ENCODE measurements at regions of chr20 and their contacts with region 1.

Region 1: DNA sequence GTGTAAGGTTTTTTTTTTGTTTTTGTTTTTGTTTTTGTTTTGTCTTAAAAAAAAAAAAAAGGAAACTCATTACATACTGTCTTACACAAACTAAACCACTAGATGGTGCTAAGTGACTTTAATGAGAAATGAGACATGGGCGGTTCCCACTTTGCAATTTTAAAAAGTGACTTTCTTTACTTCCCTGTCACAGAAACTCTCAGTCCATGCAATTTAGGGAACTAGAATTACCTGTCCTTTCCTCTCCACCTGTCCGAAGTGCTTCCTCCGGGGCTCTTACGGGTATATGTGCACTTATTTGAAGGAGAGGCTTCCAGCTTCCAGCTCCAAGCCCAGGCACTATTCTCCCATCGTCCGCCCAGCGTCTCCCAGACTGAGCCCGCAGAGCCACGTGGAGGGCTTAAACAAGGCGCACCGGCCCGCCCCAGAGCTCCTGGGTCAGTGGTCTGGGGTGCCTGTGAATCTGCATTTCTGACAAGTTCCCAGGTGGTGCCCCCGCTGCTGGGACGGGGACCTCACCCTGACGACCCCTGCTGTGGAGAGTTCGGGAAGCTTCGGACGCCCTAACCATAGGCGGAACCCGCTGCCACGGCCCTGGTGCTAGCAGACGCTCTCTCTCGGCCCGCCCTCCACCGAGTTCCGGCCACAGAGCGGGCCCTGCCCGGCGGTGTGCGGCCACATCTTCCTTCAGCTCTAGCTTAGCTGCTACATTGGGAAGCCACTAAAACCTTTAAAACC is 26.1 kb downstream of the BFSP1 start:
- DNase-seq: peak; percentile 15 to 67 (median 54)
- H3K4me3 ChIP-seq: peak overlapping the region; percentile 59
- H3K4me3 Mint-ChIP-seq: peak overlapping the region; percentile 86 to 95 (median 92)
- H3K27ac ChIP-seq: peak overlapping the region; percentile 38
- H3K27ac Mint-ChIP-seq: peak overlapping the region; percentile 90 to 99 (median 95)
- H3K4me1 ChIP-seq: peaks cover 31% of the 10 kb centered on the region
- H3K4me1 Mint-ChIP-seq: peaks cover 41 to 43% (median 42%) of the 10 kb centered on the region in 3 donors
- H3K27me3 ChIP-seq: no peaks in the 10 kb centered on the region
- H3K27me3 Mint-ChIP-seq: peaks cover 0 to 6% of the 10 kb centered on the region in 2 donors

Region 2: GRCh38 chr20:16573001-16573965 is 931.8 kb before region 1 on chr20 and contains the start of gene KIF16B:
- CTCF ChIA-PET with region 1: no interaction called
- POLR2A ChIA-PET with region 1: interaction called, 13 read pairs
- DNase-seq: peak; percentile 52 to 81 (median 77)
- H3K4me3 ChIP-seq: peak within 1 kb of the TSS; percentile 81
- H3K4me3 Mint-ChIP-seq: peak within 1 kb of the TSS; percentile 81 to 93 (median 89)
- H3K27ac ChIP-seq: peak within 1 kb of the TSS; percentile 48
- H3K27ac Mint-ChIP-seq: peak within 1 kb of the TSS in 7 of 8 donors; percentile 30 to 89 (median 81)
- H3K4me1 ChIP-seq: peaks cover 20% of the 10 kb centered on the region
- H3K4me1 Mint-ChIP-seq: peaks cover 39 to 56% (median 46%) of the 10 kb centered on the region in 3 donors
- H3K27me3 ChIP-seq: no peaks in the 10 kb centered on the region
- H3K27me3 Mint-ChIP-seq: peaks cover 0 to 8% of the 10 kb centered on the region in 2 donors
- total RNA-seq, gene KIF16B: 3.2 to 3.4 TPM

Region 3: DNA sequence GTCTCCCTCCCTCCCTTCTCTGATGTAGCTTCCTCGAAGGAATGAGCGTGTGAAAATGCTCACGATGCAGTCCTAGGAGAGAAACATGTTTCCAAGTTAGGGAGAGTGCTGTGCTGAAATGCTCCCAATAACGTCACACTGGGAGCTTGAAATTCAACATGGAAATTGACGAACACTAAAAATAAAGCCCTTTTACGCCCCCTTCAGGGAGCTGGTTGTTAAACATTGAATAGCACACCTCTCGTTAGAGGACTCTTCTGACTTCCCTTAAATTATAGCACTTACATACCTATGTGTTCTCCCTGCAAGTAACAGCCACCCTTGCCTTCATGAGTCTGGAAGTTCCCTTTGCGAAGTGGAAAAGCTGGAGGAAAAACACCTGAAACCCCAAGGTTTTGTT is 62.5 kb before region 1 on chr20:
- CTCF ChIA-PET with region 1: no interaction called
- POLR2A ChIA-PET with region 1: no interaction called
- DNase-seq: no peak
- H3K4me3 ChIP-seq: no peak overlapping the region
- H3K4me3 Mint-ChIP-seq: no peak overlapping the region
- H3K27ac ChIP-seq: no peak overlapping the region
- H3K27ac Mint-ChIP-seq: no peak overlapping the region
- H3K4me1 ChIP-seq: no peaks in the 10 kb centered on the region
- H3K4me1 Mint-ChIP-seq: no peaks in the 10 kb centered on the region
- H3K27me3 ChIP-seq: no peaks in the 10 kb centered on the region
- H3K27me3 Mint-ChIP-seq: peaks cover 20 to 29% of the 10 kb centered on the region in 2 donors

Region 4: GRCh38 chr20:17569616-17570346 is 64.7 kb after region 1 on chr20 and contains the start of gene DSTN:
- CTCF ChIA-PET with region 1: interaction called, 10 read pairs
- POLR2A ChIA-PET with region 1: interaction called, 5 read pairs
- DNase-seq: peak; percentile 82 to 91 (median 89)
- H3K4me3 ChIP-seq: peak within 1 kb of the TSS; percentile 75
- H3K4me3 Mint-ChIP-seq: peak within 1 kb of the TSS; percentile 88 to 97 (median 94)
- H3K27ac ChIP-seq: peak within 1 kb of the TSS; percentile 84
- H3K27ac Mint-ChIP-seq: peak within 1 kb of the TSS; percentile 92 to 97 (median 94)
- H3K4me1 ChIP-seq: peaks cover 12% of the 10 kb centered on the region
- H3K4me1 Mint-ChIP-seq: peaks cover 28 to 48% (median 31%) of the 10 kb centered on the region in 3 donors
- H3K27me3 ChIP-seq: no peaks in the 10 kb centered on the region
- H3K27me3 Mint-ChIP-seq: peaks cover 2 to 6% of the 10 kb centered on the region in 2 donors
- total RNA-seq, gene DSTN: 66.4 to 66.9 TPM

Region 5: DNA sequence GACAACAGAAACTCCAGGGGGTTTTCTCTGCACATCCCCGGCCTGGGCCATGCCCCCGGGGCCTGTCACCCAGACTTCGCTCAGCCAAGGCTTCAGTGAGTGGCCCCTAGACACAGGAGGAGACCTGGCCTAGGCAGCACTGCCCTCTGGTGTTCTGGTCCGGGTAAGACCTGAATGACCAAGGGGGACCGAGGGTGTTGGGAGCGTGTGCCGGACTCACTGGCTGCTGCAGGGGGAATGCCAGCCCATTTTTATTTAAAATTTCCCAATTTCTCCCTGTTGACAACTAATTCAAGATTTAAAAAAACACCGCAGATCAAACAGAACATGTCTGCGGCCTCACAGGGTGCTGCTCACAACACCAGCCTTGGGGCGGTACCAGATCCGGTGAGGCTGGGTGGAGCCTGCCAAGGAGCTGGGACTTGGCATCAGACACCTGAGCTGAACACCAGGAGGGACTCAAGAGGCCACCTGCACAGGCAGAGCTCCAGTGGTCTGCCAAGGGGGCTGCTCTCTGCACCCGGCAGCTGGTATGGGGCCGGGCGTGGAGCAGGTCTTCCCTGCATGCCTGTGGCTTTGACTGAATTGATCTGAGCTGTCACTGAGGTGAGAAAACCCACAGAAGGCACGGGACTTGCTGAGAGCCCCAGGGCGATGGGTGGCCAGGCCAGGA is 112.6 kb after region 1 on chr20:
- CTCF ChIA-PET with region 1: interaction called, 28 read pairs
- POLR2A ChIA-PET with region 1: no interaction called
- DNase-seq: peak in 4 of 5 donors; percentile 34 to 60 (median 38)
- H3K4me3 ChIP-seq: no peak overlapping the region
- H3K4me3 Mint-ChIP-seq: no peak overlapping the region
- H3K27ac ChIP-seq: no peak overlapping the region
- H3K27ac Mint-ChIP-seq: peak overlapping the region in 5 of 8 donors; percentile 29 to 59 (median 52)
- H3K4me1 ChIP-seq: peaks cover 2% of the 10 kb centered on the region
- H3K4me1 Mint-ChIP-seq: peaks cover 4 to 11% (median 9%) of the 10 kb centered on the region in 3 donors
- H3K27me3 ChIP-seq: no peaks in the 10 kb centered on the region
- H3K27me3 Mint-ChIP-seq: no peaks in the 10 kb centered on the region

Region 6: GRCh38 chr20:17721802-17722486 is 216.9 kb after region 1 on chr20:
- CTCF ChIA-PET with region 1: no interaction called
- POLR2A ChIA-PET with region 1: no interaction called
- DNase-seq: no peak
- H3K4me3 ChIP-seq: no peak overlapping the region
- H3K4me3 Mint-ChIP-seq: no peak overlapping the region
- H3K27ac ChIP-seq: no peak overlapping the region
- H3K27ac Mint-ChIP-seq: no peak overlapping the region
- H3K4me1 ChIP-seq: no peaks in the 10 kb centered on the region
- H3K4me1 Mint-ChIP-seq: no peaks in the 10 kb centered on the region
- H3K27me3 ChIP-seq: no peaks in the 10 kb centered on the region
- H3K27me3 Mint-ChIP-seq: peaks cover 7 to 28% of the 10 kb centered on the region in 2 donors

Region 7: DNA sequence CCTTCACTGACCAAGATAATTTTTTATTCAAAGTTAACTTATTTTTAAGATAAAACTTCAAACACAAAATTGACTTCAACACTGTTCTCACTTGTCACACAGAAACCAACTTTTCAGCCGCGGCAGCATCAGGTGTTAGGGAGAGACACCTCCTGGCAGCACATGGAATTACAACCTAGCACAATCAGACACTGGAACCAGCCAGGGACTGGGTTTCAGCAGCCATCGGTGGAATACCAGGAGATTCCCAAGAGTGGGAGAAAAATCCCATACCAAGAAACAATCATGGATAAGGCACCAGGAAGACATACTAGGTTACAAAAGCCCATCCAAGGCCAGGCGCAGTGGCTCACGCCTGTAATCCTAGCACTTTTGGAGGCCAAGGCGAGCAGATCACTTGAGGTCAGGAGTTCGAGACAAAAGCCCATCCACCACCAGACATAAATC is 393.5 kb after region 1 on chr20:
- CTCF ChIA-PET with region 1: interaction called, 36 read pairs
- POLR2A ChIA-PET with region 1: no interaction called
- DNase-seq: peak; percentile 43 to 73 (median 45)
- H3K4me3 ChIP-seq: no peak overlapping the region
- H3K4me3 Mint-ChIP-seq: no peak overlapping the region
- H3K27ac ChIP-seq: no peak overlapping the region
- H3K27ac Mint-ChIP-seq: no peak overlapping the region
- H3K4me1 ChIP-seq: no peaks in the 10 kb centered on the region
- H3K4me1 Mint-ChIP-seq: peaks cover 0 to 8% (median 3%) of the 10 kb centered on the region in 3 donors
- H3K27me3 ChIP-seq: peaks cover 4% of the 10 kb centered on the region
- H3K27me3 Mint-ChIP-seq: peaks cover 26 to 37% of the 10 kb centered on the region in 2 donors

Region 8: GRCh38 chr20:17968366-17969279 is 463.6 kb after region 1 on chr20 and contains the starts of genes MGME1 and SNX5:
- CTCF ChIA-PET with region 1: interaction called, 12 read pairs
- POLR2A ChIA-PET with region 1: interaction called, 4 read pairs
- DNase-seq: peak; percentile 97 to 99 (median 99)
- H3K4me3 ChIP-seq: peak within 1 kb of the TSS; percentile 95
- H3K4me3 Mint-ChIP-seq: peak within 1 kb of the TSS; percentile 92 to 98 (median 96)
- H3K27ac ChIP-seq: peak within 1 kb of the TSS; percentile 90
- H3K27ac Mint-ChIP-seq: peak within 1 kb of the TSS; percentile 97 to 99 (median 98)
- H3K4me1 ChIP-seq: peaks cover 61% of the 10 kb centered on the region
- H3K4me1 Mint-ChIP-seq: peaks cover 68 to 83% (median 78%) of the 10 kb centered on the region in 3 donors
- H3K27me3 ChIP-seq: no peaks in the 10 kb centered on the region
- H3K27me3 Mint-ChIP-seq: no peaks in the 10 kb centered on the region
- total RNA-seq, gene MGME1: 29.2 to 31.8 TPM
- total RNA-seq, gene SNX5: 174 to 191 TPM

Measured in CD8-positive, alpha-beta memory T cell (primary cell).